B cell (primary cell): ENCODE measurements at regions of chr20 and their contacts with region 1.

Region 1: GRCh38 chr20:47196091-47197081 is 160.1 kb downstream of the ZMYND8 start:
- DNase-seq: peak; percentile 81
- ATAC-seq: peak; percentile 82
- H3K4me3 ChIP-seq: peak overlapping the region in 2 of 5 experiments; percentile 12 to 33
- H3K4me3 Mint-ChIP-seq: peak overlapping the region; percentile 16
- H3K27ac ChIP-seq: no peak overlapping the region
- H3K27ac Mint-ChIP-seq: no peak overlapping the region
- H3K4me1 ChIP-seq: peaks cover 3 to 7% of the 10 kb centered on the region in 2 donors
- H3K4me1 Mint-ChIP-seq: peaks cover 5% of the 10 kb centered on the region
- H3K27me3 ChIP-seq: no peaks in the 10 kb centered on the region
- H3K27me3 Mint-ChIP-seq: no peaks in the 10 kb centered on the region
- CTCF ChIP-seq: peak; percentile 100

Region 2: DNA sequence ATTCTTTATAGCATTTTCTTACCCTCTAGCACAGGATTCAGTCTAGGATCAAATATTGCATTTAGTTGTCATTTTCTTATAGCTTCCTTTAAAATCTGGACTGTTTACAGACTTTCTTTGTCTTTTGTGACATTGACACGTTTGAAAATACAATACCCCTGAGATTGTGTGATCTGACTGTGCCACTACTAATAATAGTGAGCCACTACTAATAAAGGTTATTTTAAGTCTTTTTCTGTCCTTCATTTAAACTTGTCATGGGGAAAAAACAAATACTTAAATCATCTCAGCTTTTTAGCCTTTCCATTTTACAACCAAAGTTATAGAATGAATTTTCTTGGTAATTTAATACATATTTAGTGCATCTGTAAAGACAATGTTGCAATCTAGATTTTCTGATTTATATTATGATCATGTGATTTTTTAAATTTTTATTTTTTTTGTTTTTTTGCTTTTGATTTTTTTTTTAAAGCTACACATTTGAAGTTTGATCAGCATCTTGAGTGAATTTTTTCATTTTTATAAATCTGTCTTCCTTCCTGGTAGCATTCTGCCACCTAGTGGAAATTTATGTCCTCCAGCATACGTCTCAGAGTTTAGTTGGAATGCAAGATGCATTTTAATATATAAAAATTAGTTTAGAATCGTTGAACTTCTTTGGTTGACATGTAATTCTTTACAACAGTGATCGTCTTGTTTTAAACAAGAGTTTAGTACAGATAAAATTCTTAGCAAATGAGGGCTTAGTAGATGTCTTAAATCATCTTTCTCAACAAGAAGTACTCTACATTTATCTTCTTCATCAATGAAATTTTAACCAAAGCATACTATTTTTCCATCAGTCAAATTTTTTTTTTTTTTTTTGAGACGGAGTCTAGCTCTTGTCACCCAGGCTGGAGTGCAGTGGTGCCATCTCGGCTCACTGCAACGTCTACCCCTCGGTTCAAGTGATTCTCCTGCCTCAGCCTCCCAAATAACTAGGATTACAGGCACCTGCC is 424.7 kb after region 1 on chr20:
- CTCF ChIA-PET with region 1: interaction called, 7 read pairs
- POLR2A ChIA-PET with region 1: no interaction called
- intact Hi-C with region 1: loop called (anchors 1 kb)
- DNase-seq: peak; percentile 68
- ATAC-seq: peak; percentile 31
- H3K4me3 ChIP-seq: no peak overlapping the region
- H3K4me3 Mint-ChIP-seq: no peak overlapping the region
- H3K27ac ChIP-seq: peak overlapping the region in 1 of 2 donors; percentile 72
- H3K27ac Mint-ChIP-seq: peak overlapping the region; percentile 28
- H3K4me1 ChIP-seq: peaks cover 6 to 8% of the 10 kb centered on the region in 2 donors
- H3K4me1 Mint-ChIP-seq: peaks cover 30% of the 10 kb centered on the region
- H3K27me3 ChIP-seq: no peaks in the 10 kb centered on the region
- H3K27me3 Mint-ChIP-seq: no peaks in the 10 kb centered on the region
- CTCF ChIP-seq: peak; percentile 94

Region 3: GRCh38 chr20:47663333-47664067 is 467.1 kb after region 1 on chr20:
- CTCF ChIA-PET with region 1: interaction called, 5 read pairs
- POLR2A ChIA-PET with region 1: no interaction called
- intact Hi-C with region 1: loop called (anchors 5 kb)
- DNase-seq: peak; percentile 82
- ATAC-seq: peak; percentile 84
- H3K4me3 ChIP-seq: no peak overlapping the region
- H3K4me3 Mint-ChIP-seq: no peak overlapping the region
- H3K27ac ChIP-seq: no peak overlapping the region
- H3K27ac Mint-ChIP-seq: peak overlapping the region; percentile 78
- H3K4me1 ChIP-seq: peaks cover 0 to 7% of the 10 kb centered on the region in 2 donors
- H3K4me1 Mint-ChIP-seq: peaks cover 7% of the 10 kb centered on the region
- H3K27me3 ChIP-seq: no peaks in the 10 kb centered on the region
- H3K27me3 Mint-ChIP-seq: no peaks in the 10 kb centered on the region
- CTCF ChIP-seq: peak; percentile 96